ENCODE measurements at regions of chr6 and their contacts with region 1.

Region 1: DNA sequence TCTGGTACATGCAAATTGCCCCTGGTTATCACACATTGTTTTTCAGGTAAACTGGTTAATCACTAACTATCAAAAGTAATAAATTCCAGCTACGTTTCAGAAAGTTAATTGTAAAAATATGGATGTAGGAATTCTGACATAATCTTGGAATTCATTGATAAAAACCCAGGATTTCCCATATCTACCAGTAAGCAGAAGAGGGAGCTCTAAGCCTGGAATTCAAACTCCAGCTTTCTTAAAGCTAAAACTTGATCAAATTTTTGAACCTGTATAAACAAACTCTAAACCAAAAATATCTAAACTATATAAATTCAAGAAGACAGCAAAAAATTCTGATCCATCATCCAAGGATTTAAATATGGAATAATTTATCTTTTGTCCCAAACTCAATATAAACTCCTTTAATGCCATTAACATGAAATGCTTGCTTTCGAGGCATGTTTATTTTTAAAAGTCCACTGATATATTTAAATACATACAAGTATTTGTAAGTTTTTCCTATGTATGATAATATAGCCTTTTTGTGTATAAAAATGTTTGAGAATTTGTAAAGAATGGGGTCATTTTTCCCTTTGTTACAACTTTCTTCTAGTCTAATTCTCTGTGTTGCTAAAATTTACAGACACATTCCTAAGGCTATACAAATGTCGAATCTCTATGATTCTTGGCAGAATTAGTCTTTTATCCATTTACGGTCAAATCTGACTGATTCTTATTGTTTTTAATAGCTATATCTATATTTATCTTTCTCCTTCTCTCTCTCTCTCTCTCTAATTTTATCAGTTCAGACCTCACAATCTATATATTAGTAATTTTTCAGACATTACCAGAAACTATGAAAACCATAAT is 91.4 kb upstream of the RNF217 start:
- DNase-seq: no peak
- ATAC-seq: peak; percentile 58 to 75 (median 65)
- H3K4me3 ChIP-seq: no peak overlapping the region
- H3K27ac ChIP-seq: no peak overlapping the region
- H3K4me1 ChIP-seq: no peaks in the 10 kb centered on the region
- H3K27me3 ChIP-seq: no peaks in the 10 kb centered on the region
- CTCF ChIP-seq: peak; percentile 75 to 79 (median 77)
- POLR2A ChIP-seq: no peak

Region 2: GRCh38 chr6:125114248-125114858 is 243.5 kb after region 1 on chr6:
- intact Hi-C with region 1: loop called in 1 of 2 experiments (anchors 5 kb)
- DNase-seq: peak in 1 of 3 donors; percentile 54
- ATAC-seq: peak; percentile 58 to 77 (median 68)
- H3K4me3 ChIP-seq: no peak overlapping the region
- H3K27ac ChIP-seq: no peak overlapping the region
- H3K4me1 ChIP-seq: no peaks in the 10 kb centered on the region
- H3K27me3 ChIP-seq: no peaks in the 10 kb centered on the region
- CTCF ChIP-seq: peak; percentile 86 to 91 (median 88)
- POLR2A ChIP-seq: no peak